Activated naive CD4-positive, alpha-beta T cell treated with anti-CD3 and anti-CD28 coated beads for 36 hours (primary cell): ENCODE measurements at regions of chr12 and their contacts with region 1.

Region 1: GRCh38 chr12:29103539-29103974 is 45.5 kb upstream of the FAR2 start:
- DNase-seq: peak; percentile 64
- H3K4me3 Mint-ChIP-seq: no peak overlapping the region
- H3K27ac Mint-ChIP-seq: no peak overlapping the region
- H3K4me1 Mint-ChIP-seq: peaks cover 31% of the 10 kb centered on the region
- H3K27me3 Mint-ChIP-seq: no peaks in the 10 kb centered on the region

Region 2: GRCh38 chr12:28223025-28223554 is 880.5 kb before region 1 on chr12:
- CTCF ChIA-PET with region 1: no interaction called
- intact Hi-C with region 1: loop called (anchors 1 kb)
- DNase-seq: peak; percentile 52
- H3K4me3 Mint-ChIP-seq: peak overlapping the region; percentile 48
- H3K27ac Mint-ChIP-seq: peak overlapping the region; percentile 87
- H3K4me1 Mint-ChIP-seq: peaks cover 56% of the 10 kb centered on the region
- H3K27me3 Mint-ChIP-seq: no peaks in the 10 kb centered on the region

Region 3: GRCh38 chr12:28550757-28551704 is 552.5 kb before region 1 on chr12:
- CTCF ChIA-PET with region 1: no interaction called
- intact Hi-C with region 1: no loop called
- DNase-seq: no peak
- H3K4me3 Mint-ChIP-seq: no peak overlapping the region
- H3K27ac Mint-ChIP-seq: no peak overlapping the region
- H3K4me1 Mint-ChIP-seq: peaks cover 5% of the 10 kb centered on the region
- H3K27me3 Mint-ChIP-seq: no peaks in the 10 kb centered on the region

Region 4: GRCh38 chr12:29073628-29074239 is 29.8 kb before region 1 on chr12:
- CTCF ChIA-PET with region 1: interaction called, 13 read pairs
- intact Hi-C with region 1: no loop called
- DNase-seq: peak; percentile 18
- H3K4me3 Mint-ChIP-seq: no peak overlapping the region
- H3K27ac Mint-ChIP-seq: no peak overlapping the region
- H3K4me1 Mint-ChIP-seq: no peaks in the 10 kb centered on the region
- H3K27me3 Mint-ChIP-seq: peaks cover 27% of the 10 kb centered on the region

Region 5: GRCh38 chr12:29148911-29149690 is 45.5 kb after region 1 on chr12 and contains the start of gene FAR2:
- CTCF ChIA-PET with region 1: no interaction called
- intact Hi-C with region 1: loop called (anchors 1 kb)
- DNase-seq: peak; percentile 60
- H3K4me3 Mint-ChIP-seq: peak within 1 kb of the TSS; percentile 87
- H3K27ac Mint-ChIP-seq: peak within 1 kb of the TSS; percentile 59
- H3K4me1 Mint-ChIP-seq: peaks cover 8% of the 10 kb centered on the region
- H3K27me3 Mint-ChIP-seq: peaks cover 13% of the 10 kb centered on the region
- total RNA-seq, gene FAR2: 2.2 to 4.4 TPM

Region 6: DNA sequence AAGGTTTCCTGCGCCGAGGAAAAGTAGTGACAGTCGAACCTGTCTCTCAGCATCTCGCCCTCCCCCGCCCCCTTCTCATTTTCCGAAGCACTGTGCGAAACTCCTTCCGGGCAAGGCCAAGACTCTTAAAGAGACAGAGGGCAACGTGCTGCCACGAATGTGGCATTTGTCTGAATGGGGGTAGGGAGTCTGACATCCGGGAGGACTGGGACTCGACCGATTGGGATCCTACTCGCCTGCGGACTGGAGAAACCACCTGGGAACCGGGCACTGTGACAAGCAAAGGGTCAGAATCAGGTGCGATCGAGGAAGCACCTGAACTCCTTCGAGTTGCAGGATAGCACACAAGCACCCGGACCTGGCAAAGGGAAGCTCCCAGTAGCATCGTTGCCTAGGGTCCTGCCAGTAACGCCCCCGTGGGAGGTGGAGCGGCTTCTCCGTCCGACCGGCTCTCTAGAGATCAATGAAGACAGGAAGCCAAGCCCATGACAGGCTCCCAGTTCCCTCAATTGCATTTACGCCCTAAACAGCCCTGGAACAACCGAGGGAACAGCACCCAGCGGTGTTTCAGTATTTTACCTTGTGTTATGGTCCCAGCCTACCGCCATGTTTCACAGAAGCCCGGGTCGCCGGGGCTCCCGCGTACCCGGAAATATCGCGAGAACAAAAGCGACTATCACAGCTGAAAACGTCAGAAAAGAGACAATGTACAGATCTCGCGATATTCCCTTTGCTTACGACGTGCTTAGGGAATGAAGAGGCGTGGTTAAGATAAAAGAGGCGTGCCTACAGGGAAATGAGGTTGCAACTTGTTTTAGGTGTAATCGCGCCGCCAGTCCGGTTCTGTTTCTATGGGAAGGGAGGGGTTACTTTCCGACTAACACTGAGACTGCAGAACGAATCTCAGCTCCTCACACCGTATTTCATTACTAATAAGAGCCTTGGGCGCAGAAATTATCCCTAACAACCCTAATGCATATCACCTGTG is 277.3 kb after region 1 on chr12 and contains the start of gene ERGIC2:
- CTCF ChIA-PET with region 1: no interaction called
- intact Hi-C with region 1: loop called (anchors 2 kb)
- DNase-seq: peak; percentile 95
- H3K4me3 Mint-ChIP-seq: peak within 1 kb of the TSS; percentile 95
- H3K27ac Mint-ChIP-seq: peak within 1 kb of the TSS; percentile 96
- H3K4me1 Mint-ChIP-seq: peaks cover 47% of the 10 kb centered on the region
- H3K27me3 Mint-ChIP-seq: no peaks in the 10 kb centered on the region
- total RNA-seq, gene ERGIC2: 112 to 116 TPM

Region 7: GRCh38 chr12:29396762-29397161 is 293.2 kb after region 1 on chr12:
- CTCF ChIA-PET with region 1: no interaction called
- intact Hi-C with region 1: no loop called
- DNase-seq: no peak
- H3K4me3 Mint-ChIP-seq: no peak overlapping the region
- H3K27ac Mint-ChIP-seq: no peak overlapping the region
- H3K4me1 Mint-ChIP-seq: no peaks in the 10 kb centered on the region
- H3K27me3 Mint-ChIP-seq: no peaks in the 10 kb centered on the region